ENCODE measurements at regions of chr15 and their contacts with region 1.

Region 1: GRCh38 chr15:55221090-55222011 is 24.6 kb upstream of the RSL24D1 start:
- DNase-seq: peak; percentile 60
- ATAC-seq: peak; percentile 59
- H3K4me3 Mint-ChIP-seq: no peak overlapping the region
- H3K27ac Mint-ChIP-seq: peak overlapping the region; percentile 88
- H3K4me1 Mint-ChIP-seq: peaks cover 65% of the 10 kb centered on the region
- H3K27me3 Mint-ChIP-seq: no peaks in the 10 kb centered on the region

Region 2: GRCh38 chr15:55241891-55242290 is 20.5 kb after region 1 on chr15:
- CTCF ChIA-PET with region 1: interaction called, 6 read pairs
- POLR2A ChIA-PET with region 1: interaction called, 4 read pairs
- intact Hi-C with region 1: loop called (anchors 1 kb)
- DNase-seq: no peak
- ATAC-seq: peak; percentile 33
- H3K4me3 Mint-ChIP-seq: no peak overlapping the region
- H3K27ac Mint-ChIP-seq: peak overlapping the region; percentile 88
- H3K4me1 Mint-ChIP-seq: peaks cover 78% of the 10 kb centered on the region
- H3K27me3 Mint-ChIP-seq: no peaks in the 10 kb centered on the region

Region 3: DNA sequence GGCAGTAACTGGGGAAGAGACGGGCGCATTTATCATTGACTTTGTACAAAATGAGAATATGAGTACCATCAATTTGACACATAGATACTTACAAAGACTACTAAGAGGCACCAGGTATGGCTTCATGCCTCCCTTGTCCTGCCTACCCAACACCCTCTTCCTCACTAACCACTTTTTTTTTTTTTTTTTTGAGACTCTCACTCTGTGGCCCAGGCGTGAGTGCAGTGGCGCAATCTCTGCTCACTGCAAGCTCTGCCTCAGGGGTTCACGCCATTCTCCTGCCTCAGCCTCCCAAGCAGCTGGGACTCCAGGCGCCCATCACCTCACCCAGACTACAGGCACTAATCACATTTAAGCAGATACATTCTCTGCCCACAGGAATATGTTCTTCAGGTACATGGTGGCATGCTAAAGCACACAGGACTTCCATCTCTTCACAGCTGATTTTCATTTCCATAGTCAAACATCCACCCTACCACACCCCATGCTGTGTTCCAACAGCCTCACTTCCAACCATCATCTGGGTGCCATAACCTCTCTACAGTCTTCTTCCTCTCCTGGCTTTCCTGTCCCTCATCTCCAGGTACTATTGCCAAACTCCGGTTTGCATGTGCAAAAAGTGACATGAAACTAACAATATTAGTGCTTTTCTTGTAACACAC is 26.5 kb after region 1 on chr15:
- CTCF ChIA-PET with region 1: interaction called, 3 read pairs
- POLR2A ChIA-PET with region 1: interaction called, 4 read pairs
- intact Hi-C with region 1: loop called in 1 of 2 experiments (anchors 2 kb)
- DNase-seq: no peak
- ATAC-seq: peak; percentile 42
- H3K4me3 Mint-ChIP-seq: no peak overlapping the region
- H3K27ac Mint-ChIP-seq: peak overlapping the region; percentile 25
- H3K4me1 Mint-ChIP-seq: peaks cover 66% of the 10 kb centered on the region
- H3K27me3 Mint-ChIP-seq: no peaks in the 10 kb centered on the region

Region 4: DNA sequence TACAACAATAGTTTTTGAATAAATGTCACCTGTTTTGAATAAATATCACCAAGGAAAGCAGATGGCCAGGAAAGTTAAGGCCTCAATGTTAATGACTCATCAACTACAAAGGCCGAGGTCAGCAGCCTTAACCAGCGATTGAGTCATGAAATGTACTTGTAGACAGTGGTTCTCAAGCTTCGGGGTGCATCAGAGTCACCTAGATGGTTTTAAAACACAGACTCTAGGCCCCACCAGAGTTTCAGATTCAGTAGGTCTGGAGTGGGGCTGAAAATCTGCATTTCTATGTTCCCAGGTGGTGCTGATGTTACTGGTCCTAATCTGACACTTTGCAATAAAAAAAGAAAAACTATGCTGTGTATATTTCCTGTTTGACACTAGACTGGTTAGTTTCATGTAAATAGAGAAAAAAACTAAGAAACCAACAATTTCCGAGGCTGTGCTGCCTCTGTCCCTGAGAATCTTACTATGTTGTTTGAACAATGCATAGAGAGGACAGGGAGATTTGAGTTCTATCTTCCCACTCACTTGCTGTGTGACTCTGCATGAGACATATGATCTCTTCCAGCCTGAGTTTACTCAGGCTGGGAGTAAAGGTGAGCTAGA is 58.5 kb after region 1 on chr15:
- CTCF ChIA-PET with region 1: interaction called, 4 read pairs
- POLR2A ChIA-PET with region 1: interaction called, 4 read pairs
- intact Hi-C with region 1: loop called in 1 of 2 experiments (anchors 1 kb)
- DNase-seq: peak; percentile 73
- ATAC-seq: peak; percentile 78
- H3K4me3 Mint-ChIP-seq: peak overlapping the region; percentile 45
- H3K27ac Mint-ChIP-seq: peak overlapping the region; percentile 95
- H3K4me1 Mint-ChIP-seq: peaks cover 95% of the 10 kb centered on the region
- H3K27me3 Mint-ChIP-seq: no peaks in the 10 kb centered on the region

Region 5: DNA sequence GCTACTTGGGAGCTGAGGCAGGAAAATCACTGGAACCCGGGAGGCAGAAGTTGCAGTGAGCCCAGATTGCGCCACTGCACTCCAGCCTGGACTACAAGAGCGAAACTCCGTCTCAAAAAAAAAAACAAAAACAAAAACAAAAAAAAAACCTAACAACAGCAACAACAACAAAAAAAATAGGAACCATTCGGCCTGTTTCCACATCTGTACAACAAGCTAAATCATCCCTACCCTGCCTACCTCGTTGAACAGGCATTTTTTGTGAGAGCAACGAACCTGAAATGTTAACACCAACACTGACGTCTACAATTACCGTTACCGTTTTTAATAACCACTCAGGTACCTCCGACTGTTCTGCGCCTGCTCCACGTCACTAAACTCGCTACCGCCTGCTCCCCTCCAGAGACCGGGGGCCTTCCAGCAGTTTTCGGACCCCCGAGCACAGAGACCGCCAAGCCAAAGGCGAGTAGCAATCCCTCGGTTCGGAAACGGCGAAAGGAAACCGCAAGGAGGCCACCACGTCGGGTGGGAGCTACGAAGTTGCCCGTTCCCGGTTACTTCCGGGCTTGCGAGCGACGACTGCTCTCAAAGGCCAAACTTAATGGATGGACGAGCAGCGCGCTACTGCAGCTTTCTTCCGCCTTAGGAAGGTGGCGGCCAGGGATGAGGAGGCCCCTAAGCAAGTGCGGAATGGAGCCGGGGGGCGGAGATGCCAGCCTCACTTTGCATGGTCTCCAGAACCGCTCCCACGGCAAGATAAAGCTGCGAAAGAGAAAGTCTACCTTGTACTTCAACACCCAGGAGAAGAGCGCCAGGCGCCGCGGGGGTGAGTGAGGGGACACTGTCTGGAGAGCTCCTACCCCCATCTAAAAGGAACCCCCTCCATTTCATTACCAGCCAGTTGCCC is 97.5 kb after region 1 on chr15 and contains the starts of genes PIGB and PIGBOS1:
- CTCF ChIA-PET with region 1: no interaction called
- POLR2A ChIA-PET with region 1: interaction called, 4 read pairs
- intact Hi-C with region 1: loop called in 1 of 2 experiments (anchors 1 kb)
- DNase-seq: peak; percentile 88
- ATAC-seq: peak; percentile 89
- H3K4me3 Mint-ChIP-seq: peak within 1 kb of the TSS; percentile 97
- H3K27ac Mint-ChIP-seq: peak within 1 kb of the TSS; percentile 99
- H3K4me1 Mint-ChIP-seq: peaks cover 51% of the 10 kb centered on the region
- H3K27me3 Mint-ChIP-seq: no peaks in the 10 kb centered on the region
- total RNA-seq, gene PIGB: 19.8 to 21.1 TPM
- total RNA-seq, gene PIGBOS1: 8.8 to 11.0 TPM

Region 6: GRCh38 chr15:55407949-55408791 is 186.8 kb after region 1 on chr15 and contains the starts of genes CCPG1 and PIERCE2:
- CTCF ChIA-PET with region 1: interaction called, 5 read pairs
- POLR2A ChIA-PET with region 1: no interaction called
- intact Hi-C with region 1: loop called in 1 of 2 experiments (anchors 2 kb)
- DNase-seq: peak; percentile 95
- ATAC-seq: peak; percentile 93
- H3K4me3 Mint-ChIP-seq: peak within 1 kb of the TSS; percentile 87
- H3K27ac Mint-ChIP-seq: peak within 1 kb of the TSS; percentile 90
- H3K4me1 Mint-ChIP-seq: peaks cover 24% of the 10 kb centered on the region
- H3K27me3 Mint-ChIP-seq: no peaks in the 10 kb centered on the region
- total RNA-seq, gene CCPG1: 11.3 to 12.2 TPM
- total RNA-seq, gene PIERCE2: 0.34 to 0.81 TPM